Endothelial cell of umbilical vein (primary cell): ENCODE measurements at regions of chr2 and their contacts with region 1.

Region 1: GRCh38 chr2:239401067-239401880 is 454 bp upstream of the HDAC4 start:
- DNase-seq: peak; percentile 99
- H3K4me3 ChIP-seq: peak overlapping the region; percentile 67 to 75 (median 71)
- H3K27ac ChIP-seq: peak overlapping the region; percentile 100
- H3K4me1 ChIP-seq: peaks cover 14% of the 10 kb centered on the region
- H3K27me3 ChIP-seq: no peaks in the 10 kb centered on the region
- CTCF ChIP-seq: no peak
- POLR2A ChIP-seq: peak; percentile 97

Region 2: GRCh38 chr2:238847841-238848690 is 553.2 kb before region 1 on chr2 and contains the start of gene TWIST2:
- CTCF ChIA-PET with region 1: no interaction called
- POLR2A ChIA-PET with region 1: no interaction called
- dilution Hi-C with region 1: no loop called
- intact Hi-C with region 1: loop called (anchors 5 kb)
- DNase-seq: peak; percentile 50
- H3K4me3 ChIP-seq: peak within 1 kb of the TSS; percentile 35 to 61 (median 59)
- H3K27ac ChIP-seq: no peak within 1 kb of the TSS
- H3K4me1 ChIP-seq: peaks cover 4% of the 10 kb centered on the region
- H3K27me3 ChIP-seq: peaks cover 14 to 31% of the 10 kb centered on the region in 2 experiments
- CTCF ChIP-seq: no peak
- POLR2A ChIP-seq: no peak
- total RNA-seq, gene TWIST2: 1.2 and 2.3 TPM in 2 replicates

Region 3: GRCh38 chr2:239143858-239144718 is 257.2 kb before region 1 on chr2:
- CTCF ChIA-PET with region 1: interaction called, 5 read pairs
- POLR2A ChIA-PET with region 1: no interaction called
- dilution Hi-C with region 1: no loop called
- intact Hi-C with region 1: loop called (anchors 1 kb)
- DNase-seq: peak; percentile 37
- H3K4me3 ChIP-seq: no peak overlapping the region
- H3K27ac ChIP-seq: no peak overlapping the region
- H3K4me1 ChIP-seq: no peaks in the 10 kb centered on the region
- H3K27me3 ChIP-seq: no peaks in the 10 kb centered on the region
- CTCF ChIP-seq: peak; percentile 59 to 72
- POLR2A ChIP-seq: no peak

Region 4: GRCh38 chr2:239239607-239240413 is 161.5 kb before region 1 on chr2:
- CTCF ChIA-PET with region 1: no interaction called
- POLR2A ChIA-PET with region 1: no interaction called
- dilution Hi-C with region 1: no loop called
- intact Hi-C with region 1: no loop called
- DNase-seq: no peak
- H3K4me3 ChIP-seq: no peak overlapping the region
- H3K27ac ChIP-seq: no peak overlapping the region
- H3K4me1 ChIP-seq: no peaks in the 10 kb centered on the region
- H3K27me3 ChIP-seq: no peaks in the 10 kb centered on the region
- CTCF ChIP-seq: no peak
- POLR2A ChIP-seq: no peak

Region 5: DNA sequence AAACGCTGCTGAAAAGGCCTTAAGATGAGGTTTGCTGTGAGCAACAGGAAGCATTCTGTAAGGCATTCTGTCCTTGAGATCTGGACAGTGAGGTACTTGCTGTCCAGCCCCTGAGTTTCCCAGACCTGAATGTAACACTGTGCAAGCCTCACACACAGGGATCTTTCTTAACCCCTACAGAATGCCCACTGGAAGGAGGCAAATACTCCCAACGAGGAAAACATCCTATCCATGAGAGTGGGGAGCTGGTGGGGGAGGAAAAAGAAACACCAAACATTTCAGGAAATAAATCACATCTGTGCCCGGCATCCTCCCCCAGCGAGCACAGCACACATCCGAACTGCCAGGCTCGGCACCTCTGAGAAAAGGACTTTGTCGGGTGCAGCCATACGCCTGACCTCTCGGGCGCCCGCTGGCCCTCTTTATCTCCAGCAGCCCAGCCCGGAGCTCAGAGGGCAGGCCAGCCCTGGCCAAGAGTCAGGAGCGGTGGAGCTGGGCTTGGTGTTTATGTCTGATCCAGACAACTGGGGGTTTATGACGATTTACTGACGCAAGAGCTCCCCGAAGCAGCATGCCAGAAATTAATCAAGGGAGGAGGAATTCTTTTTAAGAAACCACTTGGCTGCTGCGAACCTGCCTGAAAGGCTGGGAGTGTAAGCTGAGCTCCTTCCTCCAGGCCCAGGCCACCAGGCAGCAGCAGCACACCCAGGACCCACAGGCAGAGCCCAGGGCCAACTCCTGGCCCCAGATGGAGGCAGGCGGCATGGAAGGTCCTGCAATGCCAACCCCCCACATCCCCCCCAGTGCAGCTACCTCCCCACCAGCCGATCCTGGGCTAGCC is 72.7 kb before region 1 on chr2:
- CTCF ChIA-PET with region 1: no interaction called
- POLR2A ChIA-PET with region 1: no interaction called
- dilution Hi-C with region 1: no loop called
- intact Hi-C with region 1: loop called (anchors 2 kb)
- DNase-seq: peak; percentile 63
- H3K4me3 ChIP-seq: no peak overlapping the region
- H3K27ac ChIP-seq: no peak overlapping the region
- H3K4me1 ChIP-seq: peaks cover 12% of the 10 kb centered on the region
- H3K27me3 ChIP-seq: no peaks in the 10 kb centered on the region
- CTCF ChIP-seq: no peak
- POLR2A ChIP-seq: no peak

Region 6: DNA sequence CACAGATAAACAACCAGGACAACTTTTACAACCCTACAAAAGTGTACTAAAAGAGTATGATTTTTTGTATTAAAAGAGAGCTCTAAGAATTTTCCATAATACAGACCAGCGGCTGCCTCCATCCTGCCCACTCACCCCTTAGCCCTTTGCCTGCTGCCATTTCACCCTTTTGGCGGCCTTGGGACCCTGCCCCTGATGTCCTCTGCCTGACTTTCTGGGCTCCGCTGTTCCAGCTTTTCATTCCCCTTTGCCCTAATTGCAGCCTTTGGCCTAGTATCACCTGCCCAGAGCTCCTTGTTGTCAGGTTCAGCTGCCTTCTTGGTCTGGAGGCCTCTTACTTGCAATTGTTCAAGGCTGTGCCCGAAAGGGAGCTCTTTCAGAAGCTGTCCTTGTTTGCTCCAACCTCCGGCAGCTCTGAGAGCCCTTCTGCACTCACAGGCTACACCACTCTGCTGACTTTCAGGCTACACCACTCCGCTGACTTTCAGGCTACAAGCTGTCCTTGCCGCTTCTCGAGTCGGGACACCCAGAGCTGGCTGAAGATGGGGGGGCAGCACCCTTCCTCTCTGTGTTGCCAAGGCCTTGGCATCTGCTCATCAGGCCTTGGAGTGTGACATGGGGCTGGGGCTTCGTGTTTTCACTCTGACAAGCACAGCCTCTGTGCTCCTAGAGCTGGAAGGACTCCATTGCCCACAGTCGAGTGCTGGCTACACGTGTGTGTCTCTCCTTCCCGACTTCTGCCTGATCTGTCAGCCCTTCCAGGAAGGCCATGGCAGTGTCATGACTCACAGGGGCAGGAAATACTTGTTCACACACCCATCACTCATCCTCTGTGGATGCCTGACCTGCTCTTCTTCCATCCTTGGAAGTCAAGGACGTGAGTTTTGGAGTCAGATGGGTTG is 42.6 kb after region 1 on chr2:
- CTCF ChIA-PET with region 1: no interaction called
- POLR2A ChIA-PET with region 1: no interaction called
- dilution Hi-C with region 1: no loop called
- intact Hi-C with region 1: no loop called
- DNase-seq: no peak
- H3K4me3 ChIP-seq: no peak overlapping the region
- H3K27ac ChIP-seq: no peak overlapping the region
- H3K4me1 ChIP-seq: no peaks in the 10 kb centered on the region
- H3K27me3 ChIP-seq: peaks cover 0 to 4% of the 10 kb centered on the region in 2 experiments
- CTCF ChIP-seq: no peak
- POLR2A ChIP-seq: no peak

Region 7: DNA sequence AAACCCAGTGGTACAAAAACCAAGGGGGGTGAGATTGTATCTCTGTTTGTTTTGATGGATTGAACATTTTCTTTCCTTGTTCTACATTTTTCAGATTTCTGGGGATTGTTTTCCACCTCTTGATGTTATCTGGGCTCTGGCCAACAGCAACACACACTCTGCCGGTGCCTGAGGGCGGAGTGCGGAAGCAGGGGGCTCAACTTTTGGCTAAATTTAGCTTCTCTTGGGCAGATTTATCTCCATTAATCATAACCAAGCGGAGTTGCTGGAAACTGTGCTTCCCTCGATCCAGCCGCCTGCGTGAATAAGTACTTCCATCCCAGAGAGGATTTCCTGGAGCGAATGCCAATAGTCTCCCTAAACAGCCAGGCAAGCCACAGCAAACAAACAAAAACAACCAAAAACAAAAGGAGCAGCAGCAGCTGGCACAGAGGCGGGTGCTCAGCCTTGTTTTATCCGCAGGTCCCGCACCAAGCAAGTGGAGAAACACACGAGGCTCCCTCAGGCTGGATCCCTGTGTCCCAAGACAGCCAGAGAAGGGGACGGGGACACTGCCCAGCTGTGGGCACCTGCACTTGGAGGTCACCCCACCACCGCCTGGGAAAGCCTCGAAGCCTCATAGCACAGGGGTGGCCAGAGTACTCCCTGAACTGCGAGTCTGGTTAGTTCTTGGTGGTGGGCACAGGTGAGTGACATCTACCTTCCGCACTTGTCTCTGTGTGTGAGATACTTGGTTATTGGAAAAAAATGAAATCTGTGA is 480.5 kb after region 1 on chr2:
- CTCF ChIA-PET with region 1: no interaction called
- POLR2A ChIA-PET with region 1: no interaction called
- dilution Hi-C with region 1: no loop called
- intact Hi-C with region 1: loop called (anchors 1 kb)
- DNase-seq: peak; percentile 75
- H3K4me3 ChIP-seq: no peak overlapping the region
- H3K27ac ChIP-seq: peak overlapping the region; percentile 72
- H3K4me1 ChIP-seq: peaks cover 17% of the 10 kb centered on the region
- H3K27me3 ChIP-seq: no peaks in the 10 kb centered on the region
- CTCF ChIP-seq: no peak
- POLR2A ChIP-seq: no peak

Region 8: DNA sequence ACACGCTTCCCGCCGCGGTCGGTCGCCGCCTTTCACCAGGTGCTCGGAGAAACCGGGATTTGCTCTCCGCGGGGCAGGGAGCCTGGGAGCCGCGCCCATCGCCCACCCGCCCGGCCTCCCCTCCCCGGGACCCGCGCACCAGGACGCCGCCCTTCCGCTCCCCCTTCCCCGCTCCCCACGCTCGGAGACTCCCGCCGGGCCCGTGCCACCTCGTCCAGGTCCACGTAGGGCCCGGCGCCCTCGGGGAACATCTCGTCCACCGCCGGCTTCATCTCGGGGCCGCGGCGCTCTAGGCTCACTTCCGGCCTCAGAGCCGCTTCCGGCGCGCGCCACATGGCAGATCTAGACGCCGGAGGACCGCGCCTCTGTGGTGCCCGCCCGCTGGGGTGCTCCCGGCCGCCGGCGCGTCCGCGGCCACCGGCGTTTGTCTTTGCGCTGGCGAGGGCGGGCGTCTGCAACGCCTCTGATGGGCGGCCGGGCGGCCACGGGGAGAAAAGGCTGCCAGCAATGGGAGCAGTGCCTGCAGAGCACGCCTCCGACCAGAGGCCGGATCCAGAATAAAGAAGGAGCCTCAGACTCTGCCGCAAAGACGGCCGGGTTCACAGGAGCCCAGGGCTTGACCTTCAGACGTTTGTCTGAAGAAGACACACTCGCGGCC is 734.9 kb after region 1 on chr2 and contains the start of gene COPS9:
- CTCF ChIA-PET with region 1: no interaction called
- POLR2A ChIA-PET with region 1: no interaction called
- dilution Hi-C with region 1: no loop called
- intact Hi-C with region 1: loop called (anchors 5 kb)
- DNase-seq: peak; percentile 85
- H3K4me3 ChIP-seq: peak within 1 kb of the TSS; percentile 55 to 71 (median 59)
- H3K27ac ChIP-seq: peak within 1 kb of the TSS; percentile 58
- H3K4me1 ChIP-seq: peaks cover 9% of the 10 kb centered on the region
- H3K27me3 ChIP-seq: no peaks in the 10 kb centered on the region
- CTCF ChIP-seq: no peak
- POLR2A ChIP-seq: peak; percentile 72
- total RNA-seq, gene COPS9: 189 and 196 TPM in 2 replicates